Heart right ventricle (tissue), 16 donors: ENCODE measurements at regions of chr3 and their contacts with region 1.

Region 1: DNA sequence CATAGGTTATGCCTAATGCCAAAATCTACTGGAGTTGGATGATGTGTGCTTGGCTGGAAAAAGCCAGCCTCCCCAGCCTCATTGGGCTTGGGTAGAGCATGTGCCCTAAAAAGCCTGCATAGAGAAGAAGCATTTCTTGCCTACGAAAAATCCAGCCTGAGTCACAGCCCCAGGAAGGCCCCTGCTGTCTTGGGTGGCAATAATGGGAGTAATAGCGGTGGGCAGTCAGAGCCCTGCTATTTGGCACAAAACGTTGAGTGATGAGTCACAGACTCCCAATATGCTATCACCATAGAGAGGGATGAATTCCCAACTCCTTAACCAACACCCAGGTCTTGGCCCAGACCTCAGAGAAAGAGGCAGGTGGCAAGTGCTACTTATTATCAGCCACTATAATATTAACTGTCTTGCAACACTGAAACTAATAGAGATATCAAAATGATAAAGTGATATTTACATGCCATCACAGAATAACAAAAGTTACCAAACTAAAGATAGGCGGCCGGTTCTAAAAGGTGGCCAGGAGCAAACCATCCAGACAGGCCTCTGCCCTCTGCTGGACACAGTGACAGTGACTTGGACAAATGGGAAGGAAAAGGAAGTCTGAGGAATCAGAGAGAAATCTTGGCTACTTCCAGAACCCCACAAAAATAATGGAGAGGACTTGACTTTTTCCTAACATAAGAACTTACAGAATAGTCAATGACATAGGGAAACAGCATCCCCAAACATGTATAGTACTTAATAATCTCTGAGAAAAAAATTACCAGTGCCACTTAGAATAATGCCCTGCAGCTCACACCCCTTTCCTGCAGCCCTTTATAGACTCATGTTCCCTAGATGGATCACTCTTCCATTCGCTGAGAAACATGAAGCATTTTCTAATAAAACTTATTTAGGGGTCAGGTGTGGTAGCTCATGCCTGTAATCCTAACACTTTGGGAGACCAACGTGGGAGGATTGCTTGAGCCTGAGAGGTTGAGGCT is 51.9 kb upstream of the MUC13 start:
- DNase-seq: no peak
- ATAC-seq: peak in 7 of 8 donors; percentile 16 to 50 (median 41)
- H3K4me3 ChIP-seq: no peak overlapping the region
- H3K27ac ChIP-seq: peak overlapping the region in 8 of 10 donors; percentile 42 to 75 (median 68)
- H3K4me1 ChIP-seq: peaks cover 2 to 50% (median 45%) of the 10 kb centered on the region in 9 donors
- H3K27me3 ChIP-seq: no peaks in the 10 kb centered on the region
- CTCF ChIP-seq: peak in 7 of 9 donors; percentile 36 to 62 (median 49)

Region 2: DNA sequence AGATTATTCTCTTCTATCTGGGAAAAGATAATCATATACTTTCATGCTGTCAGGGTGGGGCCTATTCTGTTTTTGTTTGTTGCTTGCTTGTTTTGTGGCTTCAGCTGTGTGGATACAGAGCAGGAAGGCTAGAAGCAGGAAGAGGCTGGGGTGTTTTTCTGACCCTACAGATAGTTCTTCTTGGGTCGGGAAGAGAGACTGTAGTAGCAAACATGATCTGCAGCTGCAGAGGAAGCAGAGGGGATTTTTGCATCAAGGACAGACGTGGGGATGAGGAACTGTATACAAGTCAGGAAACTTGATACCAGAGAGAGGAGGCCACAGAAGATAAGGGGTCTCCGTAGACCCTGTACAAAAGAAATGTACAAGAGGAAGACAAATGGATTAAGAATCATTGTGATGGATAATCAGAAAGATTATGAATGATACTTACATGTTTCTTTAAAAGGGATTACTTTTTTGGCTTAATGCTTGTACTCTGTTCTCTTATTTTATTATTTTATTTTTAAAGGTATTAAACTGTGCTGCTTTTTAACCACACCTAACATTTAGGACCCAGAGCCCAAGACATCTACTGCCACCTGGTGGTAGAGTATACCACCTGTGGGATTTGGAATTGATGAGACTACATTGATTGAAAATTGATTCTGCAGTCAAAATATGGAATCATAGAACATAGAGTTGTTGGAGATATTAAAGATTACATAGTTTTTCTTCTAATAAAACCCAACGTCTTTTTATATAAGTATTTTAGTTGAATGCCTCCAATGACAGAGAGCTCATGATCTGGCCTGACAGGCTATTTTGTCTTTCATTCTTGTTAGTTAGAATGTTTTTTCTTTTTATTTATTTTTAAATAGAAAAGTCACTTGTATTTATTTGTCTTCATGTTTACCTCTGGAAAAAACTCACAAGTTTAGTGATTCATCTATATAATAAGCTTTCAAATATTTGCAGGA is 907.2 kb before region 1 on chr3:
- intact Hi-C with region 1: no loop called
- DNase-seq: no peak
- ATAC-seq: peak in 5 of 8 donors; percentile 36 to 63 (median 54)
- H3K4me3 ChIP-seq: no peak overlapping the region
- H3K27ac ChIP-seq: peak overlapping the region in 4 of 10 donors; percentile 13 to 49 (median 26)
- H3K4me1 ChIP-seq: peaks cover 0 to 63% (median 36%) of the 10 kb centered on the region in 9 donors
- H3K27me3 ChIP-seq: no peaks in the 10 kb centered on the region
- CTCF ChIP-seq: peak; percentile 69 to 87 (median 80)

Region 3: GRCh38 chr3:124761250-124761796 is 225.1 kb before region 1 on chr3:
- intact Hi-C with region 1: loop called in 3 of 10 experiments (anchors 5 to 10 kb)
- DNase-seq: peak; percentile 88 to 89
- ATAC-seq: peak; percentile 87 to 94 (median 89)
- H3K4me3 ChIP-seq: no peak overlapping the region
- H3K27ac ChIP-seq: peak overlapping the region in 6 of 10 donors; percentile 4 to 64 (median 52)
- H3K4me1 ChIP-seq: peaks cover 0 to 22% (median 13%) of the 10 kb centered on the region in 9 donors
- H3K27me3 ChIP-seq: no peaks in the 10 kb centered on the region
- CTCF ChIP-seq: peak; percentile 96 to 99 (median 97)

Region 4: DNA sequence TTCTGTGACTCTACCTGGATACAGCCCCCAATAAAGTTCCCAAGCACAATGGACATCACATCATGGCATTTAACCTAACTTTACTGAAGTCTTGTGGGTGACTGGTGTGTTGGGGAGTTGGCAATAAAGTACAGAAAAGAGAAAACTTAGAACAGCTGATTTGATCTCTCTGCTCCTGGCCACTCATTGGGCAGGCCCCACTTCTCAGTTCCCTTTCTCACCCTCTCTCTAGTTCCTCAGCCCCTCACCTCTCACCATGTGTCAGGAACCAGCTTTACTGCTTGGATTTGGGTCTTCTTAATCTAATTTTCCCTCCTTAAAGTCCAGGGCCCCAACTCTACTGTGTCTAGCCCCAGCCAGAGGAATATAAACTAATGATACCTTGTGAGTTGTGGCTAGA is 51.2 kb before region 1 on chr3:
- intact Hi-C with region 1: loop called in 3 of 10 experiments (anchors 5 to 10 kb)
- DNase-seq: no peak
- ATAC-seq: no peak
- H3K4me3 ChIP-seq: no peak overlapping the region
- H3K27ac ChIP-seq: no peak overlapping the region
- H3K4me1 ChIP-seq: no peaks in the 10 kb centered on the region
- H3K27me3 ChIP-seq: no peaks in the 10 kb centered on the region
- CTCF ChIP-seq: no peak

Region 5: DNA sequence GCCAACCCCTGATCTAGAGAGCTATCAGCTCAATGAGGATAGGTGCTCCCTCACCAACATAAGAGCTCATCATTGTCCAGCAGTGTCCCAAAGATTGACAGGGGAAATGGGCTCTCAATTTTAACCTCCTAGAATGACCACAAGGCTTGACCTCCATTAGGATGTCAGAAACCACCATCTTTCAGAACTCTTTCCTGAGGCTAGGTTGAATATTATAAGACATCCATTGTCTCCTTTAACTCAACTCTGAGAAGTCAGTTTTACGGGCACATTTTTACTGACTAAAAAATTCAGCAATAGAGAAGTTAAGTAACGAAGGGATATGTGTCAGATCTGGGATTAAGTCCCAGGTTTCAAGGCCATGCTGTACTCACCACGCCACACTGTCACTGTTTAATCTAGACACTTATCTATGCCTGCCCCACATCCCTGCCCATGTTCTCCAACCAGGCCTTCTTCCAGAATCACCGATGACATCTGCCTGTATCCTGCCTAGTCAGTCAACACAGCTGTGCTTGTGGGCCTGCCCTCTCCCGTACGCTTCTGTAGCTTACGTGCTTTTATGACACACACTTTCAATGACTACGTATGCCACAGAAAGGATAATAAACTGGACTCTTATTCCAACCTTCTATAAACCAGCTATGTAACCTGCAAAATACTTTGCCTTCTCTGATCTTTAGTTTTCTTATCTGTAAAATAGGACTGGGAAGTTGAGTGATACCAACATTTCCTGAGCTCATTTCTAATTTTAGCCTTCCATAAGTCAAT is 34.8 kb before region 1 on chr3:
- intact Hi-C with region 1: no loop called
- DNase-seq: no peak
- ATAC-seq: no peak
- H3K4me3 ChIP-seq: no peak overlapping the region
- H3K27ac ChIP-seq: no peak overlapping the region
- H3K4me1 ChIP-seq: no peaks in the 10 kb centered on the region
- H3K27me3 ChIP-seq: no peaks in the 10 kb centered on the region
- CTCF ChIP-seq: no peak

Region 6: GRCh38 chr3:125220727-125221429 is 234.4 kb after region 1 on chr3:
- intact Hi-C with region 1: no loop called
- DNase-seq: no peak
- ATAC-seq: no peak
- H3K4me3 ChIP-seq: no peak overlapping the region
- H3K27ac ChIP-seq: no peak overlapping the region
- H3K4me1 ChIP-seq: peaks cover 0 to 4% (median 0%) of the 10 kb centered on the region in 9 donors
- H3K27me3 ChIP-seq: no peaks in the 10 kb centered on the region
- CTCF ChIP-seq: no peak